SK-N-SH (cell line): ENCODE measurements at regions of chr14 and their contacts with region 1.

Region 1: DNA sequence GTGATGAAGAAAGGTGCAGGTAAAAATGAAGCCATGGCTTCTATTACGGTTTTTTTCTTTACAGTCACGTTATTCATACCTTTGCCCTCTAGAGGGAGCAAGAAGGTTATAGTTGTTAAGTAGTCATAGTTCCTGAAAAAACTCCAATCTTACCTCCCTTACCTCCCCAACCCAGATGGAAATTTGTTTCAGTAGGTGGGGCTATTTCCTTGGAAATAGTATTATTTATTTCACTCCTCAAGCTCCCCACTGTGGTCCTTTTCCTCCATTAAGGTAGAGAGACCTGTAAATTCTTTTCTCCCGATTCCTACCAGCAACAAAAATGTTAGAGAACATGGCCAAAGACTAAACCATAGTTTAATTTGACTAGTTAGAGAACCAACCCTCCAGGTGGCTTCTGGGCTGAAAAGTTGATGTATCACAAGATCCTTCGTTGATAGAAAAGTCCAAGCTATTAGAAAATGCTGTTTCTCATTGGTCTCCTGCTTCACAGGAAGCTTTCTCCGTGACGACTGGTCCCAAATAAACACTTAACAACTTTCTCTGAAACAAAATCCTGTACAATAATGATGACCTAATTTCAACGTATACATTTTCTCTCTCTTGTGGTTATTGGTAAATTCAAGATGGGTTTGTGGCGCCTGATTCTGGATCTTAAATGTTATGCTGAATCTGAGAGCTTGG is 43.5 kb downstream of the TMX1 start:
- DNase-seq: peak; percentile 68
- H3K4me3 ChIP-seq: no peak overlapping the region
- H3K27ac ChIP-seq: peak overlapping the region; percentile 64 to 80
- H3K4me1 ChIP-seq: peaks cover 4% of the 10 kb centered on the region in 2 experiments; a peak in 3 of 4 replicates
- H3K27me3 ChIP-seq: no peaks in the 10 kb centered on the region
- CTCF ChIP-seq: peak; percentile 96
- EP300 ChIP-seq: no peak
- RAD21 ChIP-seq: peak; percentile 99

Region 2: DNA sequence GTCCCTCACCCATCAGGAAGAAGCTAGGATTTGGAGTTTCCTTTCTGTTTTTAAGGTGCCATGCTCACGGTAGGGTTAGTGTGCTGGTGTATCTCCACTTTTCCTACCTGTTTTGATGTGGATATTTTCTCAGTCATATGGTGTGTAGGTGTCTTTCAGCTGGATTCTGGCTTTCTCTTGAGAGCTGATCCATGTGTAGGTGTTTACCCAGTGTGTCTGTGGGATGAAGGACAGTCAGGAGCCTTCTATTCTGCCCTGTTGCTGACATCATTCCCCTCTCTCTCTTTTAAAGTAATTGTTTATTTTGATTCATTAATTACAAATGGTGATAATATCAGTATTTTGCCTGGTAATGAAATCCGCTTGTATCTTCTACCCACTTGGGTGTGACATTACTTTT is 20.7 kb before region 1 on chr14:
- CTCF ChIA-PET with region 1: interaction called, 14 read pairs
- POLR2A ChIA-PET with region 1: no interaction called
- DNase-seq: no peak
- H3K4me3 ChIP-seq: no peak overlapping the region
- H3K27ac ChIP-seq: no peak overlapping the region
- H3K4me1 ChIP-seq: no peaks in the 10 kb centered on the region; a peak in 1 of 4 replicates
- H3K27me3 ChIP-seq: no peaks in the 10 kb centered on the region
- CTCF ChIP-seq: no peak
- EP300 ChIP-seq: no peak
- RAD21 ChIP-seq: no peak

Region 3: GRCh38 chr14:51472881-51473280 is 189.3 kb after region 1 on chr14:
- CTCF ChIA-PET with region 1: interaction called, 15 read pairs
- POLR2A ChIA-PET with region 1: no interaction called
- DNase-seq: peak; percentile 68
- H3K4me3 ChIP-seq: no peak overlapping the region
- H3K27ac ChIP-seq: peak overlapping the region; percentile 98
- H3K4me1 ChIP-seq: peaks cover 16 to 24% of the 10 kb centered on the region in 2 experiments
- H3K27me3 ChIP-seq: no peaks in the 10 kb centered on the region
- CTCF ChIP-seq: no peak
- EP300 ChIP-seq: peak; percentile 12 to 78; a peak in 2 of 4 replicates
- RAD21 ChIP-seq: peak; percentile 44

Region 4: DNA sequence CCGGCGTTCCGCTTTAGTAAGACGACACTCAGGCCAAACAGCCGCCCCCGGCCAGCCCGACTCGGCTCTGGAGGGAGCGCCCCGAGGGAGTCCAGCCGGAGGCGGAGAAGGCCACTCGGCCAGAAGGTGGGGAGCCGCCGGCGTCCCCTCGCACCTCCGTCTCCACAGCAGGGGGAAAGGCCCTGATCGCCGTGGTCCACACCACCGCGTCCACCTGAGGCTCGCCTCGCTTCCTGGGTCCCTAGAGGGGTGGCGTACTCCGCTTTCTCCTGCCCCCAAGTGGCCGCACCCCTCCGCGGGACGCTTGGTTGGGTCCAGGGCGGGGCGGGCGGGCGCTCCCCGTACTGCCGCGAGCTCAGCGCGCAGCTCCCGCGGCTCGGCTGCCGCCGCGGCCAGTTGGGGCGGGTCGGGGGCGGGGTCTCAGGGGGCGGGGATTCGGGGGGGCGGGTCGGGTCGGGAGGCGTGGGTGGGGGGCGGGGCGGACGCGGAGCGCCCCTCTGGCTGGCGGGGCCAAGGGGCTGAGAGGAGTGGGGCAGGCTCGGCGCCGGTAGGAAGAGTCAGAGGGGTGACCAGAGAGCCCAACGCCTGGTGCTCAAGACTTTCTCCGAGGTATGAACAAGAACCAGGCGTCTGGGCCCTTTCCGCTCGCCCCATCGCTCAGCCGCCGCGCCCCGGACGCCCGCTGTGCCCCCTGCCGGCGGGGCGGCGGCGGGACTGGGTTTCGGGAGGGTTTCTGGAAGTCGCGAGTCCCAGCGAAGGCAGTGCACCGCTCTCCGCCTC is 368.0 kb after region 1 on chr14 and contains the start of gene FRMD6:
- CTCF ChIA-PET with region 1: interaction called, 43 read pairs
- POLR2A ChIA-PET with region 1: interaction called, 6 read pairs
- DNase-seq: peak; percentile 97
- H3K4me3 ChIP-seq: peak within 1 kb of the TSS; percentile 93 to 95
- H3K27ac ChIP-seq: peak within 1 kb of the TSS; percentile 96 to 97
- H3K4me1 ChIP-seq: peaks cover 0 to 23% of the 10 kb centered on the region in 2 experiments; a peak in 2 of 4 replicates
- H3K27me3 ChIP-seq: no peaks in the 10 kb centered on the region
- CTCF ChIP-seq: peak; percentile 79
- EP300 ChIP-seq: peak in 1 of 2 experiments; percentile 49; a peak in 2 of 4 replicates
- RAD21 ChIP-seq: peak; percentile 38
- polyA plus RNA-seq, gene FRMD6: 147 and 169 TPM in 2 replicates

Region 5: GRCh38 chr14:51682411-51682810 is 398.9 kb after region 1 on chr14:
- CTCF ChIA-PET with region 1: interaction called, 11 read pairs
- POLR2A ChIA-PET with region 1: no interaction called
- DNase-seq: no peak
- H3K4me3 ChIP-seq: no peak overlapping the region
- H3K27ac ChIP-seq: peak overlapping the region; percentile 11 to 36; a peak in 2 of 4 replicates
- H3K4me1 ChIP-seq: peaks cover 29 to 61% of the 10 kb centered on the region in 2 experiments
- H3K27me3 ChIP-seq: no peaks in the 10 kb centered on the region
- CTCF ChIP-seq: no peak
- EP300 ChIP-seq: no peak
- RAD21 ChIP-seq: no peak

Region 6: GRCh38 chr14:51865953-51866747 is 582.6 kb after region 1 on chr14:
- CTCF ChIA-PET with region 1: interaction called, 10 read pairs
- POLR2A ChIA-PET with region 1: no interaction called
- DNase-seq: no peak
- H3K4me3 ChIP-seq: no peak overlapping the region
- H3K27ac ChIP-seq: no peak overlapping the region; a peak in 1 of 4 replicates
- H3K4me1 ChIP-seq: peaks cover 5 to 28% of the 10 kb centered on the region in 2 experiments; a peak in 3 of 4 replicates
- H3K27me3 ChIP-seq: no peaks in the 10 kb centered on the region
- CTCF ChIP-seq: no peak
- EP300 ChIP-seq: no peak
- RAD21 ChIP-seq: no peak